Panc1 (cell line): ENCODE measurements at regions of chr3 and their contacts with region 1.

Region 1: DNA sequence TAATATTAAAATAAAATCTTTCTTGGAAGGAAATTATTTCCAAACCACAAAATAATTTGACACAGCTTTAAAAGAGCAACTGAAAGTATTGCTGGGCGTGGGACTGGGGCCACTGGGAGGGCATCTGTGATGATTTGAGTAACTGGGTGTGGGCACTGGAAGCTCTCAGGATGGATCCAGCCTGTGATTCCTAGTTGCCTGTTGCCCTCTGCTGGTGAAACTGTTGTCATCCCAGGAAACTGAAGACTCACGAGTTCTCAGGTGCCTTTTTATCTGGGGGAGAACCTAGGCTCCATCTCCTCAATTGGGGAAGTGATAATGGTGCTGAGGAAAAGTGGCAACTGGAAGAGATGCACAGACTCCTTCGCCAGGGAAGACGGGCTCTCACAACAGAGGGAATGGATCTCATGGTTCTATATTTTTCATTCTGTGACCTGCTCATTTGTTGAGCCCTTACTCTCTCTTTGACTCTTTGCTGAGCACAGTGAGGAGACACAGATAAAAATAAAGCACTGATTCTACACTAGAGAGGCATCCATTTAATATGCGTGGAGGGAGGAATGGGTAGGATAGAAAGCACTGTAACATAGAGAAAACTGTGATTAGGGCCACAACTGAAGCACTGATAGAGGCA is 61.6 kb downstream of the TPRG1 start:
- DNase-seq: peak; percentile 18
- ATAC-seq: peak; percentile 96
- H3K4me3 ChIP-seq: no peak overlapping the region
- H3K27ac ChIP-seq: no peak overlapping the region
- H3K4me1 ChIP-seq: no peaks in the 10 kb centered on the region
- H3K27me3 ChIP-seq: no peaks in the 10 kb centered on the region; the same call in 1 of the 2 replicates
- CTCF ChIP-seq: peak; percentile 89

Region 2: DNA sequence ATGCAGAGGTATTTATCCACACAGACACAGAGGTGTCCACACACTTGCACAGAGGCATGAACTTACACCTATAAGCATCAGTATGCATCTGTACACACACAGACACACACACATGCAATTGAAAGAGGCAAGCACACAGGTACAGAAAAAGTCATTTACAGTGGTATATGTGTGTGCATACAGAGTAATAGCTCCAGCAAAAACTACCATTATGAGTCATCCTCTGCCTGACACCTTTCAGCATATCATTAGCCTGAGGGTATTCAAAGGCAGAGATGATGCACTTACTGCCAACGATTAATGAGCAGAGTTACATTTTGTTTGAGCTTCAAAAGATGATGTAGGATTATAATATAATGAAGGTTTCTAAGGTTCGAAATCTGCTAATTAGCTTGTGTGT is 161.9 kb before region 1 on chr3:
- CTCF ChIA-PET with region 1: no interaction called
- POLR2A ChIA-PET with region 1: no interaction called
- in situ Hi-C with region 1: no loop called
- intact Hi-C with region 1: no loop called
- DNase-seq: no peak
- ATAC-seq: no peak
- H3K4me3 ChIP-seq: no peak overlapping the region
- H3K27ac ChIP-seq: no peak overlapping the region
- H3K4me1 ChIP-seq: no peaks in the 10 kb centered on the region
- H3K27me3 ChIP-seq: no peaks in the 10 kb centered on the region
- CTCF ChIP-seq: no peak

Region 3: GRCh38 chr3:189123595-189124387 is 109.6 kb before region 1 on chr3:
- CTCF ChIA-PET with region 1: no interaction called
- POLR2A ChIA-PET with region 1: no interaction called
- in situ Hi-C with region 1: no loop called
- intact Hi-C with region 1: no loop called
- DNase-seq: no peak
- ATAC-seq: no peak
- H3K4me3 ChIP-seq: no peak overlapping the region
- H3K27ac ChIP-seq: no peak overlapping the region
- H3K4me1 ChIP-seq: no peaks in the 10 kb centered on the region
- H3K27me3 ChIP-seq: peaks cover 11% of the 10 kb centered on the region
- CTCF ChIP-seq: no peak

Region 4: DNA sequence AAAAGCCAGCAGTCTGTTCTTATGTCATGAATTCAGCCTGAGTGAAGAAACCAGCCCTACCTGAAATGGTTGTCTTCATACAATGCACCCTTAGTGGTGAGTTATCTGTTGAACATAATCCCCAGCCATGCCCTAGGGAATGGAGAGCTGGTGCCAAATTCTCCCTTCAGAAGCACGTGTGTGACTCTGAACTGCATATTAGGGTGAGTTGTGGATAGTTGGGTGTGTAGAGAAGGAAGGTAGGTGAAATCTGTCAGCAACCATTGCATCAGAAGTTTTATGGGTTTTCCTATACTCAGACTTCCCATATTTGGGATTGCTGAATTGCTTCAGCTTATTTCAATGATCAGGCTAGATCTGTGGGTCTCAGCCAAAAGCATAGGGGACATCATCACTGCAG is 351.3 kb after region 1 on chr3:
- CTCF ChIA-PET with region 1: interaction called, 11 read pairs
- POLR2A ChIA-PET with region 1: no interaction called
- in situ Hi-C with region 1: no loop called
- intact Hi-C with region 1: no loop called
- DNase-seq: no peak
- ATAC-seq: no peak
- H3K4me3 ChIP-seq: no peak overlapping the region
- H3K27ac ChIP-seq: no peak overlapping the region
- H3K4me1 ChIP-seq: no peaks in the 10 kb centered on the region
- H3K27me3 ChIP-seq: no peaks in the 10 kb centered on the region
- CTCF ChIP-seq: no peak